A673 (cell line): ENCODE measurements at regions of chr16 and their contacts with region 1.

Region 1: GRCh38 chr16:64738321-64738960 is 383.4 kb downstream of the CDH11 start:
- DNase-seq: no peak
- H3K4me3 ChIP-seq: no peak overlapping the region
- H3K27ac ChIP-seq: no peak overlapping the region
- H3K4me1 ChIP-seq: no peaks in the 10 kb centered on the region
- H3K27me3 ChIP-seq: no peaks in the 10 kb centered on the region
- CTCF ChIP-seq: no peak

Region 2: DNA sequence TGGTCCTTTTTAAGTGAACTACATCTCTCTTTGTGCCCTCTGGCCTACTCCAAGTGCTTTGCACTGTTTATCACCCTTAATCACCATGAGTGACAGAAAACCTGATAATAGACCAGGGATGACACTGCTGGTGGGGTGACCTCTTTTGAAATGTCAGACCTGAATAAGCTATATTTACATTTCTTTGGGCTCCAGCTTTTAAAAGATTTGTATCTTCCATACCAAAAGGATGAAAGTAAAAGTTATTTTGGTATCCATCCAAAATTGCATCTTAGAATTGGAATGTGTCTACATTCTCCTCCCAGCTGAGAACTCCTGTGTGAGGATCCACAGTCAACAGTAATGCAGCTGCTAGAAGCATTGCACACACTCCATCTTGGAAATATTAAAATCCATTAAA is 13.5 kb after region 1 on chr16:
- CTCF ChIA-PET with region 1: no interaction called
- POLR2A ChIA-PET with region 1: no interaction called
- intact Hi-C with region 1: loop called (anchors 1 kb)
- DNase-seq: no peak
- H3K4me3 ChIP-seq: no peak overlapping the region
- H3K27ac ChIP-seq: no peak overlapping the region
- H3K4me1 ChIP-seq: peaks cover 3% of the 10 kb centered on the region
- H3K27me3 ChIP-seq: no peaks in the 10 kb centered on the region
- CTCF ChIP-seq: no peak

Region 3: DNA sequence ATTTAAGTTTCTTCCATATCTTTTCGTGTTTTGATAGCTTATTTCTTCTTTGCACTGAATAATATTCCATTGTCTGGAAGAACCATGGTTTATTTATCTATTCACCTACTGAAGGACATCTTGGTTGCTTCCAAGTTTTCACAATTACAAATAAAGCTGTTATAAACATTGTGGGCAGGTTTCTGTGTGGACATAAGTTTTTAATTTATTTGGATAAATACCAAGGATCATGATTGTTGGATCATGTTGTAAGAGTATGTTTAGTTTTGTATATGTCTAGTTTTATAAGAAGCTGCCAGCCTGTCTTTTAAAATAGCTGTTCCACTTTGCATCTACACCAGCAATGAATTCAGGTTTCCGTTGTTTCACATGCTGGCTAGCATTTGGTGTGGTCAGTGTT is 44.0 kb after region 1 on chr16:
- CTCF ChIA-PET with region 1: no interaction called
- POLR2A ChIA-PET with region 1: no interaction called
- intact Hi-C with region 1: no loop called
- DNase-seq: no peak
- H3K4me3 ChIP-seq: no peak overlapping the region
- H3K27ac ChIP-seq: no peak overlapping the region
- H3K4me1 ChIP-seq: no peaks in the 10 kb centered on the region
- H3K27me3 ChIP-seq: no peaks in the 10 kb centered on the region
- CTCF ChIP-seq: no peak